Activated CD4-positive, alpha-beta T cell treated with anti-CD3 and anti-CD28 coated beads, Interleukin-2, amount 10 ng/mL, durations not matched to agents 7 days and 5 days (primary cell): ENCODE measurements at regions of chr6 and their contacts with region 1.

Region 1: DNA sequence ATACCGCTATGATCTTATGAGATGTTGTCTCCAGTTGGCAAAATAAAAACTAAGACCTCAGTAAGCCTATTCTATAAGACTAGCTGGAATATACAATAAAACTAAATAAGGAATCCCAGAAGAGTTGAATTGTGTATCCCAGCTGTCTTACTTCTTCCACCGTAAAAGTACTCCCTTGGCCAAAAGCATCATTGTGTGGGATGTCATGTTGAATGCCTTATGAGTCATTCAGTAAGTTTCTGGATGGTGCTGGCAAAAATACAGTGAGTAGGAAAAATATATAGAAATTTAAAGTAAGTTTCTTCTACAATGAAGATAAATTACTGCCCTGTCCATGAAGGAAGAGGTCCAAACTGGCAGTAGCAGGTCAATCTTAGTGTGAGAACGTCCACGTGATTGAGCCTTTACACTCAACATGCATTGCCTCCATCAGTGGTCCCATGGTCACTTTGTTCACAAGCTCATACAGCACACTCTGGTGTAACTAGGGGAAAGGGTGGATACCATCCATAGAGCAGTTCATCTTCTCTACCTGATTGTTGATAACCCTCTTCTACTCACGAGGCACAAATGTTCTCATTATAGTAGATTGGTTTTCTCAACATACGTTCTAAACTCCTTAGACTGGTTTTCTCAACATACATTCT is 13.7 kb upstream of the ZNF318 start:
- DNase-seq: no peak
- H3K4me3 Mint-ChIP-seq: peak overlapping the region; percentile 41
- H3K27ac Mint-ChIP-seq: peak overlapping the region; percentile 93
- H3K4me1 Mint-ChIP-seq: peaks cover 51% of the 10 kb centered on the region
- H3K27me3 Mint-ChIP-seq: peaks cover 49% of the 10 kb centered on the region

Region 2: DNA sequence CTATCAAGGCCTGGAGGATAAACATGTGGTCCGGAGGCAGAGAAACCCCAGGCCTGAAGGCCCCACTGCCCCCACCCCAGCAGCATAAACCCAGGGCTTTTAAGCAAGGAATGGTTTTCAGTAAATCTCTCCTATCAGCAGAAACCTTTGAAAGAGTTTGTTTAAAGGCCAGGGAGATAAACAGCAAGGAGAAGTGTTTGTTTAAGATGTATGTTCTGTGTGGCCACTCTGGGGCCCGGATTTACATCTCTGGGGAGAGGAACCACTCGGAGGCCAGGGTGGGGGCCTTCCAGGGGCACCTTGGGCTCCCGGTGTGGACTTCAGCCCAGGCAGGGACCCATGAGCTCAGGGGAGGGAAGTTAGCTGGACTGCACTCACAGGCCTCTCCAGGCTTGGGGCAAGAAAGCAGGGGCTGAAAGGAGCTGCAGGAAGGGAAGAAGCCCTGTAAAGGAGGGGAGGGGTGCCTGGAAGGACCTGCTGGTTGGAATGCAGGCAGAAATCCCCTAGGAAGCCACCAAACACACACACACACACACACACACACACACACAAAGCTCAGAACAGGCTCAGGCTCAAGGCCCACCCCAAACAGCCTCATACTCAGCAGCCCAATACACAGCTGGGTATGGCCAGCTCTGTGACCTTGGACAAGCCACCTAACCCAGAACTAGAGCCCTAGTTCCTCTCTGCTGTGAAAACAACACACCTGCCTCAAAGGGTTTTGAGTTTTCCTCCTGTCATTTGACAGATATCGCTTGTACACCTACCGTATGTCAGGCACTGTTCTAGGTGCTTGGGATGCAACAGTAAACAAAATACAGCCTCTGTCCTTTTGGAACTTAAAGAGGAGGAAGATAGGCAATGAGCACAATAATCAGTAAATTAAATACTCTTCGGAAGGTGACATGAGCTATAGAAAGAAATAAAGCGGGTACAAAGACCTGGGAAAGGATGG is 1863.1 kb before region 1 on chr6:
- CTCF ChIA-PET with region 1: no interaction called
- POLR2A ChIA-PET with region 1: no interaction called
- DNase-seq: no peak
- H3K4me3 Mint-ChIP-seq: no peak overlapping the region
- H3K27ac Mint-ChIP-seq: no peak overlapping the region
- H3K4me1 Mint-ChIP-seq: no peaks in the 10 kb centered on the region
- H3K27me3 Mint-ChIP-seq: peaks cover 27% of the 10 kb centered on the region

Region 3: DNA sequence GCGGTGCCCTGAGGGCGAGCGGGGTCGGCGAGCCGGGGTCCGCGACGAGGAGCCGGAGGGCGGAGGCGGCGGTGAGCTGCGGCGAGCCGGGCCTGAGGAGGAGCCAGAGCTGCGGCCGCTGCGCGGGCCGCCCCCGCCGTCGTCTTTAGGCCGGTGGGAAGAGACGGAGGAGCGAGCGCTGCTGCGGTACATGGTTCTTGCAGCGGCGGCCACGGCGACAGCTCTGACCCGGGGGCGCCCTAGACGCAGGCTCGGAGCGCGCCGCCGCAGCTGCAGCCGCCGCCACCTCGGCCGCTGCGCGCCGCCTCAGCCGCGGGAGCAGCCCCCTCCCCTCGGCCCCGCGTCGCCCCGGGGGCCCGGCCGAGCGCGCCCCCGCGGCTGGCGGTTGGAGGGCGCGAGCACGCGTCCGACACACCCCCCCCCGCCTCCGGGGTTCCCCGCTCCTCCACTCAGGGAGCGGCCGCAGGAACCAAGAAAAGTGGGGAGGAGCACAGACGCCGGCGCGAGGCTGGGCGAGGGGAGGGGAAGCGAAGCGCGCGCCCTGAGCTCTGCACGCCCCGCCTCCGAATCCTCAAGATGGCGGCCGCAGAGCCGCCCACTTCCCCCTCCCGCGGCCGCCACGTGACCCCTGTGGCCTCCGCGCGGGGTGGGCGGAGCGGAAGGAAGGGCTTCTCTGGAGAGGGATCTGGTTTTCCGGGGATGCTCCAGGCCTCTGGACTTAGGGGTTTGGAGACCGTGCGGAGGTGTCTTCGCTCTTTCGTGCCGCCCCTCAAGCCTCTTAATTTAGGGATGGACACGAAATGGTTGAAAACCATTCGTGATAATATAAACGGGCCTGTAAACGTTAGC is 13.7 kb before region 1 on chr6 and contains the start of gene ZNF318:
- CTCF ChIA-PET with region 1: interaction called, 13 read pairs
- POLR2A ChIA-PET with region 1: no interaction called
- DNase-seq: peak; percentile 94
- H3K4me3 Mint-ChIP-seq: peak within 1 kb of the TSS; percentile 84
- H3K27ac Mint-ChIP-seq: peak within 1 kb of the TSS; percentile 93
- H3K4me1 Mint-ChIP-seq: peaks cover 33% of the 10 kb centered on the region
- H3K27me3 Mint-ChIP-seq: peaks cover 14% of the 10 kb centered on the region
- total RNA-seq, gene ZNF318: 12.8 to 14.5 TPM

Region 4: GRCh38 chr6:43396407-43397149 is 13.4 kb after region 1 on chr6:
- CTCF ChIA-PET with region 1: interaction called, 18 read pairs
- POLR2A ChIA-PET with region 1: no interaction called
- DNase-seq: no peak
- H3K4me3 Mint-ChIP-seq: no peak overlapping the region
- H3K27ac Mint-ChIP-seq: no peak overlapping the region
- H3K4me1 Mint-ChIP-seq: peaks cover 3% of the 10 kb centered on the region
- H3K27me3 Mint-ChIP-seq: peaks cover 46% of the 10 kb centered on the region